GM10248 (cell line): ENCODE measurements at regions of chr11 and their contacts with region 1.

Region 1: DNA sequence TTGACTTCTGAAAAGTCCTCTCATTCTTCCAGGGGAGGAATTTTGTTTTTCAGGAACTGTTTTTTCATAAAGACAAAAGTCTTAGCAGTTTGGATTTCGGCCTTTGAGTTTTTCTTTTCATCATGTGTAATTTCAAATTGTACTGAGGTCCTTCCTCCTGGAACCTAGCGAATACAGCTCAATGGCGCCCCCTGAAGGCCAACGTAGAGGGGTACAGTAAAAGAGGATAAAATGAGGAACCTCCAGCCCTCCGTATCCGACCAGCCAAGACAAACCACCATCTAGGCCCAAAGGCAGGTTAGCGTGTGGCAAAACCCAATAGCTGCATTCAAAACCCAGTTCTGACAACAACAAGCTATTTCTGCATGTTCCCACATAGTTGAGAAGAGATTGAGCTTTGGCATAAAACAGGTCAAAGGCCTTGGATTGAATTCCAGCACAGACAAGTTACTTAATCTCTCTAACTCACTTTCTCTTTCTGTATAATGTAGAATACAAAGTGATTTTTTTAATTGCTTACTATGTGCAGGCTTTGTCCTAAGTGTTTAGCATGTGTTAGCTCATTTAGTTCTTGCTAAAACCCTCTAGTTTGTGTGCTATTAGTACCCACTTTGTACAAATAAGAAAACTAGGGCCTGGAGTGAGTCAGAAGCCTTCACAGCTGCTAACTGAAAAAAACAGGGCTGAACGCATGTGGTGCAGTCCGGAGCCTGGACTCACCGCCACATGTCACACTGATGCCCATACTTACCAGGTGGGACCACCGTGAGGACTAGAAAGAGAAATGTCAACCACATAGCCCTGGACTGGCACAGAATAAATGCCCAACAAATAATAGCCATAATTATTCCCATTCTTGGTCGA is 43.2 kb upstream of the ETS1 start:
- DNase-seq: peak; percentile 77
- CTCF ChIP-seq: peak; percentile 79

Region 2: GRCh38 chr11:128172046-128172878 is 458.3 kb before region 1 on chr11:
- CTCF ChIA-PET with region 1: interaction called, 124 read pairs
- POLR2A ChIA-PET with region 1: interaction called, 3 read pairs
- DNase-seq: peak; percentile 78
- CTCF ChIP-seq: peak; percentile 84

Region 3: GRCh38 chr11:128302425-128303186 is 328.0 kb before region 1 on chr11:
- CTCF ChIA-PET with region 1: interaction called, 19 read pairs
- POLR2A ChIA-PET with region 1: no interaction called
- DNase-seq: no peak
- CTCF ChIP-seq: no peak

Region 4: DNA sequence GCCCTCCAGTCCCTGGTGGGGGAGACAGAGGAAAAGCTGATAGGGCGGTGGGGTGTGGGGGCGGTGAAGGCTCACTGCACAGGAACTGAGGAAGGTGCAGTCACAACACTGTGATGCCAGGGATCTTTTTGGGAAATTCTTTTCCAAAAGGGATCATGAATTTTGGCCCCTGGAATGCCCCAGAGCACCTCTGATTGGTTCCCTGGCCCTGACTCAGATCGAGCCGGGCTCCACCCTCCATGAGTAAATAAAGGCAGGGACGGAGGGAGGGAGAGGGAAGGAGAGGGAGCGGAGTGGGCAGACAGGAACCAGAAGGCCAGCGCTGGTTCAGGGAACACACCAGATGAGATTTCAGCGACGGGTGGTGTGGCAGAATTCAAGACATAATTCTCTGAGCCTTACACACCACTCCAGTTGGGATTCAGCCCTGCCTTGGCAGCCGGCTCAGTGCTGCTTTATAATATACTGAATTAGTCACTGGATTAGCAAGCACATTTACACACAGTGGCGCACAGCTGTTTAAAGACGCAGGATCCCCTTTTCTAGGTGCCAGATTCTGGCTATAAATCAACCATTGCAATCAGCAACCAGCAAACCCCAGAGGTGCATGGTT is 123.5 kb before region 1 on chr11:
- CTCF ChIA-PET with region 1: interaction called, 12 read pairs
- POLR2A ChIA-PET with region 1: no interaction called
- DNase-seq: no peak
- CTCF ChIP-seq: no peak

Region 5: DNA sequence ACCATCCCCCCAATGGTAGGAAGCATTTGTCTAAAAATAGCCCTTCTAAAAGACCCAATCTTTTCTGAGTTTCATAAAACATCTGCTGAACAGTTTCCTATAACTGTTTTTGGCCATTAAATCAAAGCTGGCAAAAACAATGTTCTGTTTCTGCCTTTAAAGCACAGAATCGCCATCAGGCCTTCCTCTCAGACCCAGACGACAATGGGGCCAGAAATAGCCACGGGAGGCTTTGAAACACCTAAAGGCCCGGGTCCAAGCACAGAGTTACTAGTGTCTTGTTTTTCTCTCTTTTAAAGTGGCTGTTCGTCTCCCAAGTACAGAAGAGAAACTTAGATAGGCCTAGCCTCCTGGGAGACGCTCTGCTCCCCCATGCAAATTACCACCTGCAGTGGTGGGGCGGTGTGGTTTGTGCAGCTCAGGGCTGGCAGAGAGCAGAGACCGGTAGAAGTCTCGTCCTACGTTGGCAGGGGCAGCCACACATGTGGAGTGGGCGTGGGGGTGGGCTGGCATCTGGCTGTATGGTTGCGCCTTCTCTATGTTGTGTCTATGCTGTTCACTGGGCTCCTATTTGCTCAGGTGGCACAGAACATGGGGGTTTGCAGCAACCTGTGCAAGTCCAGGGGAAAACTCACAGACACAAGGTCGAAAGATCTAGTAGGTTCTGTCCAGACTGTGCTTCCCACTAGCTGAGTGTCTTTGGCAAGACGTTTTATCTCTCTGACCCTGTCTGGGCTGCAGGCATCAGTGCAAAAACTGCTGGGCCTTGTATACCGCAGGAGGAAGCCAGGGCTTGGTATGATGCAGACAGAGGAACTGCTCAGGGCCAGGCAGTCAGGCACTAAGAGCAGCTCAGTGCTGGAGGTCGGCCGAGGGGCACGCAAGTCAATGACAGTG is 19.6 kb before region 1 on chr11:
- CTCF ChIA-PET with region 1: interaction called, 87 read pairs
- POLR2A ChIA-PET with region 1: no interaction called
- DNase-seq: peak; percentile 80
- CTCF ChIP-seq: no peak

Region 6: DNA sequence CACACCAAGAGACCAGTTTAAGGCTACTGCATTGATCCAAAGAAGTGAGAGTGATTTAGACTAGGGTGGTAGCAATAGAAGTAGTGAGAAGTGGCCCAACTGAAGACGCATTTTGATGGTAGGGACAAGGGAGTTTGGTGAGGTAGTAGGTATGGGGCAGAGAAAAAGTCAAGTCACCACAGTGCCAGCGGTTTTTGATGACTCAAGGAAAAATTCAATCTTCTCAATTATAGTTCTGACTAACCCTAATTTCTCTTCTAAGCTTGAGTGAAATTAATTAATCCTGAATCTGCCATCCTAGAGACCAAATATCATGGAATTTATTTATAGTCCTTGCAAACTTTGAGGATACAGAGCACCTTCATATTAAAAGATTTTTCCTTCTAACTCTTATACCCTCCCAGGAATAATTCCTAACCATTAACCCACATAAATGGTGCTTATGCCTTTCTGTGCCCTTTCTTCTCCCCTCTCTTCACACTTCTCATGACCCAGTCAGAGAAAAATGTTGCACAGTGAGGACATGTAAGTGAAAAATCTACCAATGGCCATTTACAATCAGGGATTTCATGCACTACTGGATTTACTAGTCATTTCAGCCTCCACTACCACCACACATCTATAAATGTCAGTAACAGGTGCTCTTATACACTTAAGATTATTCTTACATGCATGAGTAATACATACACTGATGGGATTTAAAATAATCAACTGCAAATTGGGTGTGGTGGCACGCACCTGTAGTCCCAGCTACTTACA is 607.5 kb after region 1 on chr11:
- CTCF ChIA-PET with region 1: no interaction called
- POLR2A ChIA-PET with region 1: no interaction called
- DNase-seq: no peak
- CTCF ChIP-seq: no peak